B cell (primary cell): ENCODE measurements at regions of chr19 and their contacts with region 1.

Region 1: GRCh38 chr19:36528194-36528920 is at the start of gene ZNF260:
- DNase-seq: peak; percentile 95
- ATAC-seq: peak; percentile 90
- H3K4me3 ChIP-seq: peak within 1 kb of the TSS; percentile 67 to 96 (median 81)
- H3K4me3 Mint-ChIP-seq: peak within 1 kb of the TSS; percentile 100
- H3K27ac ChIP-seq: peak within 1 kb of the TSS; percentile 86 to 88
- H3K27ac Mint-ChIP-seq: peak within 1 kb of the TSS; percentile 96
- H3K4me1 ChIP-seq: peaks cover 16 to 19% of the 10 kb centered on the region in 2 donors
- H3K4me1 Mint-ChIP-seq: peaks cover 22% of the 10 kb centered on the region
- H3K27me3 ChIP-seq: no peaks in the 10 kb centered on the region
- H3K27me3 Mint-ChIP-seq: no peaks in the 10 kb centered on the region
- CTCF ChIP-seq: no peak
- total RNA-seq, gene ZNF260: 13.2 and 20.4 TPM in 2 replicates

Region 2: GRCh38 chr19:36331353-36332228 is 196.8 kb before region 1 on chr19:
- CTCF ChIA-PET with region 1: no interaction called
- POLR2A ChIA-PET with region 1: no interaction called
- intact Hi-C with region 1: loop called (anchors 1 kb)
- DNase-seq: peak; percentile 94
- ATAC-seq: peak; percentile 97
- H3K4me3 ChIP-seq: peak overlapping the region; percentile 55 to 76 (median 75)
- H3K4me3 Mint-ChIP-seq: peak overlapping the region; percentile 89
- H3K27ac ChIP-seq: peak overlapping the region; percentile 14 to 60
- H3K27ac Mint-ChIP-seq: peak overlapping the region; percentile 87
- H3K4me1 ChIP-seq: peaks cover 15 to 17% of the 10 kb centered on the region in 2 donors
- H3K4me1 Mint-ChIP-seq: peaks cover 24% of the 10 kb centered on the region
- H3K27me3 ChIP-seq: no peaks in the 10 kb centered on the region
- H3K27me3 Mint-ChIP-seq: no peaks in the 10 kb centered on the region
- CTCF ChIP-seq: no peak

Region 3: GRCh38 chr19:36573020-36573885 is 44.9 kb after region 1 on chr19 and contains the start of gene ZNF529:
- CTCF ChIA-PET with region 1: no interaction called
- POLR2A ChIA-PET with region 1: interaction called, 6 read pairs
- intact Hi-C with region 1: loop called (anchors 1 kb)
- DNase-seq: peak; percentile 93
- ATAC-seq: peak; percentile 94
- H3K4me3 ChIP-seq: peak within 1 kb of the TSS; percentile 57 to 91 (median 88)
- H3K4me3 Mint-ChIP-seq: peak within 1 kb of the TSS; percentile 92
- H3K27ac ChIP-seq: peak within 1 kb of the TSS; percentile 82 to 98
- H3K27ac Mint-ChIP-seq: peak within 1 kb of the TSS; percentile 91
- H3K4me1 ChIP-seq: peaks cover 18% of the 10 kb centered on the region in 2 donors
- H3K4me1 Mint-ChIP-seq: peaks cover 34% of the 10 kb centered on the region
- H3K27me3 ChIP-seq: no peaks in the 10 kb centered on the region
- H3K27me3 Mint-ChIP-seq: no peaks in the 10 kb centered on the region
- CTCF ChIP-seq: no peak
- total RNA-seq, gene ZNF529: 33.2 and 35.4 TPM in 2 replicates

Region 4: DNA sequence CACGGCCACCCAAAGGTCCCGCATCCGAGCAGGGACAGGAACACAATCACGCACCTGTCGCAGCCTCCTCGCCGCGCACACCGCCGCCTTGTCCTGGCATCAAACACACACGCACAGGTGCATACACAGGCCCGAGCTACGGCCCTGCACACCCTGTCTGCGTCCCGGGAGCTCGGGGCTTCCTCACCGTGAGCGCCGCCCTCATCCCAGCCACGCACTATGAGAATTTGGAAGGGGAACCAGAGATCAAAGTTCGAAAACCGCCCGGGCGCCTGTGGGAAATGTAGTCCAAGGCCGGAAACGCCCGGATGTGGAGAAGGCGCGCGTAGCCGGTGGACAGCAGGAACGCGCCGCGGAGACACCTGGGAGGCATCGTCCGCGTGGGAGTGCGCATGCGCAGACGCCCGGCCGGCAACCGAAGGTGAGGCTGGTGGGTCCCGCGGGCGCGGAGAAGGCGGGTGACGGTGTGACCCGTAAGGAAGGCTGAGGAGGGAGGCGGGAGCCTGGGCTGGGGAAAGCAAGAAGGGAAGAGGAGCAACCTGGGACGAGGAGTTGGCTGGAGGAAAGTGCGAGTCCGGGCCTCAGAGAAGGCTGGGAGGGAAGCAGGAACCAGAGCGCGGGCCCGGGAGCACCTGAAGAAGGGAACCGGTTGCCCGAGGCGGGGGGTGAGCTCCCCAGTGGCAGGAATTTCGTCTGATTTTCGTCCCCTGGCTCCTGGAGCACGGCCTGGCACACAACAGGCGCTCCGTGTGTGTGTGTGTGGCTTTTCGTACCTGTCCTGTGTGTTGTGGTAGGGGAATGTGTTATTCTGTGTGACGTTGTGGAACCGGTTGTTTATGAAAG is 159.1 kb after region 1 on chr19 and contains the start of gene ZNF567:
- CTCF ChIA-PET with region 1: no interaction called
- POLR2A ChIA-PET with region 1: no interaction called
- intact Hi-C with region 1: loop called (anchors 2 kb)
- DNase-seq: peak; percentile 96
- ATAC-seq: peak; percentile 94
- H3K4me3 ChIP-seq: peak within 1 kb of the TSS; percentile 48 to 90 (median 76)
- H3K4me3 Mint-ChIP-seq: peak within 1 kb of the TSS; percentile 100
- H3K27ac ChIP-seq: peak within 1 kb of the TSS; percentile 56 to 72
- H3K27ac Mint-ChIP-seq: peak within 1 kb of the TSS; percentile 96
- H3K4me1 ChIP-seq: peaks cover 14 to 19% of the 10 kb centered on the region in 2 donors
- H3K4me1 Mint-ChIP-seq: peaks cover 28% of the 10 kb centered on the region
- H3K27me3 ChIP-seq: no peaks in the 10 kb centered on the region
- H3K27me3 Mint-ChIP-seq: no peaks in the 10 kb centered on the region
- CTCF ChIP-seq: no peak
- total RNA-seq, gene ZNF567: 19.7 and 22.4 TPM in 2 replicates

Region 5: GRCh38 chr19:36850559-36851442 is 322.4 kb after region 1 on chr19 and contains the start of gene ZNF345:
- CTCF ChIA-PET with region 1: no interaction called
- POLR2A ChIA-PET with region 1: no interaction called
- intact Hi-C with region 1: loop called (anchors 1 kb)
- DNase-seq: peak; percentile 93
- ATAC-seq: peak; percentile 82
- H3K4me3 ChIP-seq: peak within 1 kb of the TSS; percentile 92 to 100 (median 93)
- H3K4me3 Mint-ChIP-seq: no peak within 1 kb of the TSS
- H3K27ac ChIP-seq: peak within 1 kb of the TSS; percentile 74 to 84
- H3K27ac Mint-ChIP-seq: no peak within 1 kb of the TSS
- H3K4me1 ChIP-seq: peaks cover 16 to 20% of the 10 kb centered on the region in 2 donors
- H3K4me1 Mint-ChIP-seq: peaks cover 5% of the 10 kb centered on the region
- H3K27me3 ChIP-seq: no peaks in the 10 kb centered on the region
- H3K27me3 Mint-ChIP-seq: no peaks in the 10 kb centered on the region
- CTCF ChIP-seq: no peak
- total RNA-seq, gene ZNF345: 17.7 and 19.5 TPM in 2 replicates

Region 6: GRCh38 chr19:37466798-37467607 is 938.6 kb after region 1 on chr19 and contains the start of gene ZNF569:
- CTCF ChIA-PET with region 1: no interaction called
- POLR2A ChIA-PET with region 1: no interaction called
- intact Hi-C with region 1: loop called (anchors 2 kb)
- DNase-seq: peak; percentile 95
- ATAC-seq: peak; percentile 69
- H3K4me3 ChIP-seq: peak within 1 kb of the TSS; percentile 80 to 98 (median 86)
- H3K4me3 Mint-ChIP-seq: peak within 1 kb of the TSS; percentile 99
- H3K27ac ChIP-seq: peak within 1 kb of the TSS; percentile 77
- H3K27ac Mint-ChIP-seq: peak within 1 kb of the TSS; percentile 98
- H3K4me1 ChIP-seq: peaks cover 14 to 32% of the 10 kb centered on the region in 2 donors
- H3K4me1 Mint-ChIP-seq: peaks cover 32% of the 10 kb centered on the region
- H3K27me3 ChIP-seq: no peaks in the 10 kb centered on the region
- H3K27me3 Mint-ChIP-seq: no peaks in the 10 kb centered on the region
- CTCF ChIP-seq: no peak
- total RNA-seq, gene ZNF569: 11.1 and 13.9 TPM in 2 replicates